ENCODE measurements at regions of chr14 and their contacts with region 1.

Region 1: DNA sequence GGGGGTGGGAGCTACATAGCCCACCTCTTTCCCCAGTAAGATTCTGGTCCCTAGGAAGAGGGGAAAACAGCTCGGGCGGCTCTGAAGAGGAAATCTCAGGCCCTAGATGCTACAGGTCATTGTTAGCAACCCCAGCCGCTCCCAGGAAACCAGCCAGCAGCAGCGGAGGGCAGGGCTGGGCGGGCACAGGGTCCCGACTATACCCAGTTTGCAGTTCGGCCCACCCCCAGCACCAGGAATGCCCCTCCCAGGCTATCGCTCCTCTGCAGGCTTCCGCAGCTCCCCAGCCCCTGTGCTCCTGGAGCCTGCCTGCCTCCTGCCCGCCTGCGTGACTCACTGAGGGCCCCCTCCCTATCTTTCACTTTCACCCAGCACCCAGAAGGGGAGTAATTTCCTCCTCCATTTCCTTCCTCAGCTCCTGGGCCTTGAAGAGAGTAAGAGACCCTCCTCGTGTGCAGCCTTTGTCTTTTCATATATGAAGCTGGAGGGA is 27.2 kb upstream of the PNMA1 start:
- DNase-seq: peak; percentile 58
- H3K4me3 ChIP-seq: no peak overlapping the region
- H3K27ac ChIP-seq: peak overlapping the region; percentile 9 to 20; a peak in 3 of 4 replicates
- H3K4me1 ChIP-seq: peaks cover 28 to 67% of the 10 kb centered on the region in 2 experiments; a peak in 3 of 4 replicates
- H3K27me3 ChIP-seq: no peaks in the 10 kb centered on the region
- CTCF ChIP-seq: no peak
- EP300 ChIP-seq: no peak
- RAD21 ChIP-seq: no peak

Region 2: DNA sequence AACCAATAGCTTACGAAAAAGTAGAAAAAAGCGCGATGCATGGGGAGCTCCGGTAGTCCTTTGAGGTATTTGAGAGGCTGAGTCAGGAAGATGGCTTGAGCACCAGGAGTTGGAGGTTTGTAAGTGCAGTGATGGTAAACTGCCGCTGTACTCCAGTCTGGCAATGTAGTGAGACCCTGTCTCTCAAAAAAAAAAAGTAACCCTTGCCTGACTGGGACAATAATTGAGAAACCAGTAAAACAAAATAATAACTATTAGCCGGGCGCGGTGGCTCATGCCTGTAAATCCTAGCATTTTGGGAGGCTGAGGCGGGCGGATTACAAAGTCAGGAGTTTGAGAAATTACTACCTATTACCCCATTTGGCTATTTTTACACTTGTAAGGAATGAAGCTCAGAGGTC is 173.1 kb before region 1 on chr14:
- CTCF ChIA-PET with region 1: no interaction called
- POLR2A ChIA-PET with region 1: no interaction called
- DNase-seq: no peak
- H3K4me3 ChIP-seq: peak overlapping the region; percentile 56 to 70; a peak in 2 of 4 replicates
- H3K27ac ChIP-seq: peak overlapping the region; percentile 70 to 88; a peak in 3 of 4 replicates
- H3K4me1 ChIP-seq: peaks cover 5 to 12% of the 10 kb centered on the region in 2 experiments; a peak in 3 of 4 replicates
- H3K27me3 ChIP-seq: no peaks in the 10 kb centered on the region
- CTCF ChIP-seq: no peak
- EP300 ChIP-seq: no peak
- RAD21 ChIP-seq: no peak

Region 3: GRCh38 chr14:73753959-73754882 is 12.8 kb after region 1 on chr14:
- CTCF ChIA-PET with region 1: interaction called, 12 read pairs
- POLR2A ChIA-PET with region 1: interaction called, 3 read pairs
- DNase-seq: no peak
- H3K4me3 ChIP-seq: no peak overlapping the region
- H3K27ac ChIP-seq: peak overlapping the region in 1 of 2 experiments; percentile 75; a peak in 2 of 4 replicates
- H3K4me1 ChIP-seq: peaks cover 61 to 76% of the 10 kb centered on the region in 2 experiments
- H3K27me3 ChIP-seq: no peaks in the 10 kb centered on the region
- CTCF ChIP-seq: no peak
- EP300 ChIP-seq: no peak
- RAD21 ChIP-seq: no peak